ENCODE measurements at regions of chr6 and their contacts with region 1.

Region 1: DNA sequence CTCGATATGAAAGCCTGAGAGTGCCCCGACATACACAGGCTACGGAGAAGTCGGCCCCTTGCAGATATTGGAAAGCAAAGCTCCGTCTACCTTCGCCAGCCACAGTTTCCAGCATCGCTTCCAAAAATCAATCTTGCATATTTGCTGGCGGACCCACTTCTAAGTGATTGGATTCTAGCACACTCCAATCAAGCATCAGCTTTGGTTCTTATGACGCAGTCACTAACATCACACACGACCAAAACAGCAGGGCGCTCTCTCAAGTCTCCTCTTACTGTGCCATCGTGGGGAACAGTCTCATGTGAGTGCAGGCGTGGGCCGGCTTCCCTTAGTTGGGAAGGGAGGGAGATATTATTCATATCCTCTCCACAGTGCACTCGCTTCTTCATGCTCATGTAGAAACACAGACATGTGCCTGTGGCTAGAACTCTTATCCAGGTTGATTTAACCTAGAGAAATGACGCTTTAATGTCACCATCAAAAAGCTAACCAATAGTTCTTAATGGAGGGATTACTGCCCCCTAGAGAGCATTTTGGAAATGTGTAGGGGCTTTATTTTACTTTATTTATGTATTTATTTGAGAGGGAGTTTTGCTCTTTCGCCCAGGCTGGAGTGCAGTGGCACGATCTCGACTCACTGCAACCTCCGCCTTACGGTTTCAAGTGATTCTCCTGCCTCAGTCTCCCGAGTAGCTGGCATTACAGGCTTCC is 229.8 kb downstream of the SOD2 start:
- DNase-seq: peak; percentile 72
- H3K4me3 ChIP-seq: no peak overlapping the region
- H3K27ac ChIP-seq: peak overlapping the region; percentile 89
- H3K4me1 ChIP-seq: peaks cover 89% of the 10 kb centered on the region
- CTCF ChIP-seq: peak; percentile 80

Region 2: GRCh38 chr6:159174263-159174969 is 288.9 kb before region 1 on chr6:
- CTCF ChIA-PET with region 1: no interaction called
- POLR2A ChIA-PET with region 1: interaction called, 5 read pairs
- intact Hi-C with region 1: loop called (anchors 1 kb)
- DNase-seq: peak; percentile 87
- H3K4me3 ChIP-seq: no peak overlapping the region
- H3K27ac ChIP-seq: no peak overlapping the region
- H3K4me1 ChIP-seq: peaks cover 4% of the 10 kb centered on the region
- CTCF ChIP-seq: peak; percentile 100

Region 3: GRCh38 chr6:159212028-159212427 is 251.2 kb before region 1 on chr6:
- CTCF ChIA-PET with region 1: interaction called, 8 read pairs
- POLR2A ChIA-PET with region 1: interaction called, 30 read pairs
- intact Hi-C with region 1: loop called (anchors 1 kb)
- DNase-seq: peak; percentile 83
- H3K4me3 ChIP-seq: peak overlapping the region; percentile 12
- H3K27ac ChIP-seq: peak overlapping the region; percentile 50
- H3K4me1 ChIP-seq: peaks cover 41% of the 10 kb centered on the region
- CTCF ChIP-seq: no peak

Region 4: DNA sequence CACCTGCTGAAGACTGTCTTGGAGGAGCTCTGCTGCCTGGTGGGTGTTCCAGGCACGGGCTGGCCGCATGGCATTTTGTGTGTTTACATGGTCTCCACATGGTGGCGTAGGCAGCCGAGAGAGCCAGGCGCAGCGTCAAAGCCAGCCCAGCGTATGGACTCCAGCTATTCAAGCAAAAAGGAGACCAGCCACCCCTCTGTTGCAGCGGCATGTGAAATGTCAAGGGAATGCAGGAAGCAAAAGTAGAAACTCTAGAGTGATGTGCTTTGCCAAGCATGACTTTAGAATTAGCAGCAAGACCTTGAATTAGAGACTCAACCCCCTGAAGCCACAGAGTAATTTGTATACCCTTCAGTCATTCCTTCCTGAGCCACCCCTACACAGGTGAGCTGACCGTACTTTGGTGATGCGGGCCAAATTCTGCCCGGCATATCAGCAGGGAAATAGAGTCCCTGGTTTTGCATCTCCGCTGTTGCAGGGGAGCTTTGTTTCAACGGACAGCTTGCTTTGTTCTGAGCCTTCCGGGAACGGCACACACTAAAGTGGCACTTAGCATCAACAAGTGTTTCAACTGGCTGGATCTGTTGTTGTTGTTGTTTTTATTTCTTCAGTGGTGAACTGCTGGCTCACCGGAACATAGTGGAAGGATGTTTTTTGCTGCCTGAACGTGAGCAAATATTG is 245.5 kb before region 1 on chr6:
- CTCF ChIA-PET with region 1: interaction called, 8 read pairs
- POLR2A ChIA-PET with region 1: interaction called, 30 read pairs
- intact Hi-C with region 1: loop called (anchors 1 kb)
- DNase-seq: peak; percentile 93
- H3K4me3 ChIP-seq: peak overlapping the region; percentile 60
- H3K27ac ChIP-seq: peak overlapping the region; percentile 87
- H3K4me1 ChIP-seq: peaks cover 77% of the 10 kb centered on the region
- CTCF ChIP-seq: peak; percentile 90

Region 5: DNA sequence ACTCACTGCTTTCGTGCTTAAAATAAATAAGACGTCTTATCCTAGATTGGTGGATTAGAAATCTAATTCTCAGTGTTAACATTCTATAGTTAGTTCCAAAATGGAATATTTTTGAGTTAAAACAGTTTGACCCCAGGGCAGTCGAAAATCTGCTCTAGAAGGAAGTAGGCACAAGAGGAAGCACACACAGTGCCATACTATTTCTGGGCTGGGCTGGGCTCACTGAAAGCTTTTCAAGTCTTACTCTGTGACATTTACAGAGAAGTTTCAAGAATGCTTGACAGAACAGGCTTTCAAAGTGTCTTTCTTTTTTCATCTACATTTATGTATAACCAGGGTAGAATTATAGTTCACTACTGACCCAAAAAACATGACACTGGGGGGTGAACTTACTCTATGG is 20.0 kb after region 1 on chr6:
- CTCF ChIA-PET with region 1: no interaction called
- POLR2A ChIA-PET with region 1: interaction called, 33 read pairs
- intact Hi-C with region 1: no loop called
- DNase-seq: peak; percentile 63
- H3K4me3 ChIP-seq: peak overlapping the region; percentile 8
- H3K27ac ChIP-seq: peak overlapping the region; percentile 19
- H3K4me1 ChIP-seq: peaks cover 19% of the 10 kb centered on the region
- CTCF ChIP-seq: no peak

Region 6: GRCh38 chr6:159608961-159609651 is 145.8 kb after region 1 on chr6:
- CTCF ChIA-PET with region 1: interaction called, 3 read pairs
- POLR2A ChIA-PET with region 1: interaction called, 3 read pairs
- intact Hi-C with region 1: loop called (anchors 1 kb)
- DNase-seq: peak; percentile 66
- H3K4me3 ChIP-seq: no peak overlapping the region
- H3K27ac ChIP-seq: no peak overlapping the region
- H3K4me1 ChIP-seq: no peaks in the 10 kb centered on the region
- CTCF ChIP-seq: peak; percentile 93

Region 7: DNA sequence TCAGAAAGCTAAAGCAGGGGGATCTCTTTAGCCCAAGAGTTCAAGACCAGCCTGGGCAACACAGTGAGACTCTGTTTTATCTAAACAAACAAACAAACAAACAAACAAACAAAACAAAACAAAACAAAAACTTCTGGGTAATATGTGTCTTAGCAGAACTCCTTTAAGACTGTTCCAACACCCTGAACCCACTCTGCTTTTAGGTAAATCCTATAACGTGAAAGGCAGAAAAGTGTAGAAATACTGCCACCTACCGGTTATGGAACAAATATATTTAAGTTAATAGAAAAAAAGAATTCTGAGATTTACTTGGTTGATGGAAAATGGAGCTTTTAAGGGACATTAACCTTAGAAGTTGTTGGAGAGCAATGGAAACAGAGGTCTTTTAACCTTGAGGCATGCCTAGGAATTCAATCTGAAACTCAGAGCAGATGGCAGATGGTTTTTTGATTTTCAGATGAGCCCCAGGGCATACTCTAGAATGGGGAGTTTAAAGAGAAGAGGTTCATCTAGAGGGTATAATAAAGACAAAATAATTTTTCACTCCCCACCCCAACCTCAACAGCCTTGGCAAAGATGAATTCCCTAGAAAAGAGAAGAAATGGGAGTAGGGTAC is 191.3 kb after region 1 on chr6:
- CTCF ChIA-PET with region 1: interaction called, 3 read pairs
- POLR2A ChIA-PET with region 1: interaction called, 5 read pairs
- intact Hi-C with region 1: loop called (anchors 5 kb)
- DNase-seq: peak; percentile 86
- H3K4me3 ChIP-seq: no peak overlapping the region
- H3K27ac ChIP-seq: no peak overlapping the region
- H3K4me1 ChIP-seq: no peaks in the 10 kb centered on the region
- CTCF ChIP-seq: peak; percentile 93

Region 8: GRCh38 chr6:160221423-160221822 is 758.1 kb after region 1 on chr6:
- CTCF ChIA-PET with region 1: no interaction called
- POLR2A ChIA-PET with region 1: no interaction called
- intact Hi-C with region 1: no loop called
- DNase-seq: peak; percentile 4
- H3K4me3 ChIP-seq: no peak overlapping the region
- H3K27ac ChIP-seq: no peak overlapping the region
- H3K4me1 ChIP-seq: no peaks in the 10 kb centered on the region
- CTCF ChIP-seq: peak; percentile 45